ENCODE measurements at regions of chr6 and their contacts with region 1.

Region 1: GRCh38 chr6:131909408-131910218 is 41.6 kb downstream of the CCN2 start:
- DNase-seq: peak; percentile 55
- CTCF ChIP-seq: peak; percentile 74

Region 2: GRCh38 chr6:131694831-131695426 is 214.7 kb before region 1 on chr6:
- in situ Hi-C with region 1: loop called (anchors 10 kb)
- DNase-seq: peak; percentile 60
- CTCF ChIP-seq: peak; percentile 70

Measured in GM13977 (cell line).